HEK293 (cell line): ENCODE measurements at regions of chrX and their contacts with region 1.

Region 1: GRCh38 chrX:19535476-19535875 is 20.2 kb upstream of the MAP3K15 start:
- H3K4me3 ChIP-seq: no peak overlapping the region
- H3K27ac ChIP-seq: no peak overlapping the region
- H3K4me1 ChIP-seq: no peaks in the 10 kb centered on the region
- CTCF ChIP-seq: peak; percentile 19; the same call in 1 of the 2 replicates

Region 2: DNA sequence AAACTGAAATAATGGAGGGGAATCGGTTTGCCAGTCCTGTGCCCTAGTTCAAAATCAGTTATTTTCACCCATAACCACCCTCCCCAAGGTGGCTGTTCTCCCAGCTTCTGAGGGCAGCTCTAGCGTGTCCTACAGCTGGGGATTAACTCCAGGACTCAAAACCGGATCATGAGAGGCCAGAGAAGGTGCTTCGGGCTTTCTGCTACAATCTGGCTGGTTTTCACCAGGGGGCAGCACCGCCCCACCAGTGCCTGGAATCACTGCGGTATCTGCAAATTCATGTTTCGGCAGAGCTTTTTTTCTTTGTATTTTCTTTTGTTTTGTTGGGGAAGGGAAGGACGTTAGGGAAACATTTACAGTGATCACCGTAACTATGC is 163.3 kb before region 1 on chrX:
- CTCF ChIA-PET with region 1: interaction called, 35 read pairs
- POLR2A ChIA-PET with region 1: interaction called, 3 read pairs
- H3K4me3 ChIP-seq: no peak overlapping the region
- H3K27ac ChIP-seq: no peak overlapping the region
- H3K4me1 ChIP-seq: 0 out of 2 replicates have a peak, but pooled peaks cover 3% of the 10 kb centered on the region
- CTCF ChIP-seq: peak; percentile 74

Region 3: DNA sequence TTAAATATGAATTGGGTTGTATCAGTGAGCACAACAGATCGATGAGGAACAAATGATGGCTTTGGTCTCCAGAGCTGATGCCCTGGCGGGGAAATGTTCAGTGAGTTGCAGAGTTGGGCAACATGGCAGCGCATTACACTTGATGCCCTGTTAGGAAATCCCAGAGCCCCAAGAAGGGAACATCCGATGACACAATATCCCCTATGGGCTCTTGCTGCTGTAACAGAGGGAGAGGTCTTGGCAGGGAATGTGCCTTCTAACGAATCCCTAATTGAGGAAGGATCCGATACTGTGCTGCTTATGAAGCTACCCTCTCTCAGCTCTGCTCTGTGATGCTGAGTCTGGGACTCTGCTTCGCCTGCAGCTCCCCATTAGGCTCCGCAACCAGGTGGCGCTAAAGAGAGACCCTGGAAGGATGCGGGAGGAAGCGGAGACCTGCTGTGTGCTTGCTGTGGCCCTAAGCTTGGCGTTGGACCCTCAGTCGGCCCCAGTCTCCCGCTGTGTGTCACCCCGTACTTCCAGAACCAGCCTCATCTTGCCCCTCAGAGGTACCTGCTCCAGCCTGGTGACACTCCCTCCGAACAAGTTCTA is 152.8 kb before region 1 on chrX:
- CTCF ChIA-PET with region 1: interaction called, 10 read pairs
- POLR2A ChIA-PET with region 1: no interaction called
- H3K4me3 ChIP-seq: no peak overlapping the region
- H3K27ac ChIP-seq: no peak overlapping the region
- H3K4me1 ChIP-seq: no peaks in the 10 kb centered on the region
- CTCF ChIP-seq: peak; percentile 27; the same call in 1 of the 2 replicates